Breast epithelium (tissue), 4 donors: ENCODE measurements at regions of chr17 and their contacts with region 1.

Region 1: GRCh38 chr17:4620531-4621101 is 20.9 kb downstream of the ALOX15 start:
- DNase-seq: no peak
- H3K4me3 ChIP-seq: no peak overlapping the region
- H3K27ac ChIP-seq: no peak overlapping the region
- H3K4me1 ChIP-seq: no peaks in the 10 kb centered on the region
- H3K27me3 ChIP-seq: no peaks in the 10 kb centered on the region
- CTCF ChIP-seq: no peak
- POLR2A ChIP-seq: no peak

Region 2: GRCh38 chr17:4272213-4272971 is 348.2 kb before region 1 on chr17:
- intact Hi-C with region 1: no loop called
- DNase-seq: no peak
- H3K4me3 ChIP-seq: no peak overlapping the region
- H3K27ac ChIP-seq: no peak overlapping the region
- H3K4me1 ChIP-seq: no peaks in the 10 kb centered on the region
- H3K27me3 ChIP-seq: no peaks in the 10 kb centered on the region
- CTCF ChIP-seq: no peak
- POLR2A ChIP-seq: no peak

Region 3: GRCh38 chr17:4635823-4636375 is 15.3 kb after region 1 on chr17:
- intact Hi-C with region 1: loop called (anchors 2 kb)
- DNase-seq: no peak
- H3K4me3 ChIP-seq: no peak overlapping the region
- H3K27ac ChIP-seq: no peak overlapping the region
- H3K4me1 ChIP-seq: no peaks in the 10 kb centered on the region
- H3K27me3 ChIP-seq: peaks cover 0 to 13% of the 10 kb centered on the region in 2 donors
- CTCF ChIP-seq: no peak
- POLR2A ChIP-seq: no peak

Region 4: GRCh38 chr17:4872786-4873185 is 252.2 kb after region 1 on chr17:
- intact Hi-C with region 1: no loop called
- DNase-seq: no peak
- H3K4me3 ChIP-seq: no peak overlapping the region
- H3K27ac ChIP-seq: no peak overlapping the region
- H3K4me1 ChIP-seq: no peaks in the 10 kb centered on the region
- H3K27me3 ChIP-seq: no peaks in the 10 kb centered on the region
- CTCF ChIP-seq: no peak
- POLR2A ChIP-seq: no peak

Region 5: GRCh38 chr17:4939796-4940624 is 319.4 kb after region 1 on chr17 and contains the starts of genes RNF167 and SLC25A11:
- intact Hi-C with region 1: no loop called
- DNase-seq: peak; percentile 95 to 97
- H3K4me3 ChIP-seq: peak within 1 kb of the TSS; percentile 83 to 85 (median 83)
- H3K27ac ChIP-seq: peak within 1 kb of the TSS; percentile 97
- H3K4me1 ChIP-seq: peaks cover 17 to 29% of the 10 kb centered on the region in 2 donors
- H3K27me3 ChIP-seq: no peaks in the 10 kb centered on the region
- CTCF ChIP-seq: no peak
- POLR2A ChIP-seq: no peak
- total RNA-seq, gene RNF167: 38.3 to 49.0 (median 38.7) TPM
- total RNA-seq, gene SLC25A11: 38.8 to 48.5 (median 42.6) TPM